Activated T-helper 1 cell treated with anti-CD3 and anti-CD28 coated beads, Interleukin-12 subunit alpha, Interleukin-12 subunit beta, Interleukin-2, Interleukin-4 antibody, amounts not matched to agents 30 ng/mL and 10 ng/mL and 1 ng/mL, durations not matched to agents 14 hours and 24 hours and 36 hours (primary cell): ENCODE measurements at regions of chr17 and their contacts with region 1.

Region 1: GRCh38 chr17:80761110-80761871 is 216.7 kb downstream of the RPTOR start:
- DNase-seq: peak; percentile 71
- H3K4me3 Mint-ChIP-seq: peak overlapping the region; percentile 77
- H3K27ac Mint-ChIP-seq: peak overlapping the region; percentile 99
- H3K4me1 Mint-ChIP-seq: peaks cover 81% of the 10 kb centered on the region
- H3K27me3 Mint-ChIP-seq: no peaks in the 10 kb centered on the region

Region 2: GRCh38 chr17:80575057-80575875 is 186.0 kb before region 1 on chr17:
- intact Hi-C with region 1: loop called (anchors 1 kb)
- DNase-seq: peak; percentile 84
- H3K4me3 Mint-ChIP-seq: no peak overlapping the region
- H3K27ac Mint-ChIP-seq: peak overlapping the region; percentile 2
- H3K4me1 Mint-ChIP-seq: peaks cover 31% of the 10 kb centered on the region
- H3K27me3 Mint-ChIP-seq: no peaks in the 10 kb centered on the region

Region 3: GRCh38 chr17:80720610-80721577 is 40.4 kb before region 1 on chr17:
- intact Hi-C with region 1: loop called (anchors 2 kb)
- DNase-seq: peak; percentile 67
- H3K4me3 Mint-ChIP-seq: peak overlapping the region; percentile 54
- H3K27ac Mint-ChIP-seq: peak overlapping the region; percentile 89
- H3K4me1 Mint-ChIP-seq: peaks cover 62% of the 10 kb centered on the region
- H3K27me3 Mint-ChIP-seq: no peaks in the 10 kb centered on the region

Region 4: GRCh38 chr17:80774643-80775281 is 13.5 kb after region 1 on chr17:
- intact Hi-C with region 1: loop called (anchors 1 kb)
- DNase-seq: no peak
- H3K4me3 Mint-ChIP-seq: peak overlapping the region; percentile 64
- H3K27ac Mint-ChIP-seq: peak overlapping the region; percentile 97
- H3K4me1 Mint-ChIP-seq: peaks cover 84% of the 10 kb centered on the region
- H3K27me3 Mint-ChIP-seq: no peaks in the 10 kb centered on the region

Region 5: DNA sequence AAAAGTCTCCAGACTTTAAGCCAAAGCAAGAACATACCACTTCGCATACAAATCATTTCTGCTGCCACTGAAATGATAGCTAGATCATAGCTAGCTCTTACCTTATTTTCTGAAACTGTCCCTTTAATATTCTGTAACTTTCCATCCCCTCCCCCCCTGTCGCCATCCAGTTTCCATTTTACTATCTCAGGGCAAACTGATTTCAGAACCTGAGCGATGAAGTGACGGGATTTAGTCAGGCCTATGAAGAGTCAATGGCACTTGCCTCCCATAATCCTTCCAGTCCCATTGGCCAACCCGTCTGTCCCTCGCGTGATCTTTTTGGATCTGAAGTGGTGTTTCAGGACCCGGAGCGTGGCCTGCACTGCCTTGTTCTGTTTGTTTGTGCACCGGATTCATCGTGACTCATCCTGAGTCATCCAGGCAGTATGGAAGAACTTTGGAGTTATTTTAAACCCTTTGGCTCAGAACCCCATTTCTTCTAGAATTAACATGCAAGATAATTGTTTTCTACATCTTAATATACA is 30.5 kb after region 1 on chr17:
- intact Hi-C with region 1: loop called (anchors 1 kb)
- DNase-seq: peak; percentile 49
- H3K4me3 Mint-ChIP-seq: peak overlapping the region; percentile 79
- H3K27ac Mint-ChIP-seq: peak overlapping the region; percentile 99
- H3K4me1 Mint-ChIP-seq: peaks cover 91% of the 10 kb centered on the region
- H3K27me3 Mint-ChIP-seq: no peaks in the 10 kb centered on the region

Region 6: GRCh38 chr17:80855948-80856862 is 94.9 kb after region 1 on chr17:
- intact Hi-C with region 1: loop called (anchors 2 kb)
- DNase-seq: peak; percentile 85
- H3K4me3 Mint-ChIP-seq: peak overlapping the region; percentile 61
- H3K27ac Mint-ChIP-seq: peak overlapping the region; percentile 96
- H3K4me1 Mint-ChIP-seq: peaks cover 80% of the 10 kb centered on the region
- H3K27me3 Mint-ChIP-seq: no peaks in the 10 kb centered on the region

Region 7: DNA sequence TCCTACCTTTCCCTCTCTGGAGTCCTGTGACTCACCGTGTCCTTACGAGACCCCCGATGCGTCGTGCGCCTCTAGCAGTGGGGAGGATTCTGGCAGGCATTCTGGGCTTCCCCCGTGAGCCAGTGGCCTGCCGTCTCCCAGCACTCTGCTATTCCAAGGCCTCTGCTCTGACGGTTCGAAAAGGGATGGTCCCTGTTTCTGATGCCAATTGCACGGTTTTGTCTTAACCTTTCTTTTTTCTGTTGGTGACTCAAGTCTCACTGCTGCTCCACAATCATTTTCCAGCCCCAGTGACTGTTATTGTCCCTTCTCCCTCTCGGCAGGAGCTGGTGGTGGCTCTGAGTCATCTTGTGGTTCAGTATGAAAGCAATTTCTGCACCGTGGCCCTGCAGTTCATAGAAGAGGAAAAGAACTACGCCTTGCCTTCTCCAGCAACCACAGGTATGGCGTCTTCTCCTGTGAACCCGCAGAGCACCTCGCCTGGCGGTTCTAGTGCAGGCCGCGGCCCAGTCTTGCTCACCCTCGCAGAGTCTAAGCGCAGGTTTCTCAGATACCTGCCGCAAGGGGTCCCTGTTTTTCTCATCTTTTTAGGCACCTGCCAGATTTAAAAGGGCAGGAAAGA is 130.2 kb after region 1 on chr17:
- intact Hi-C with region 1: loop called (anchors 1 kb)
- DNase-seq: peak; percentile 79
- H3K4me3 Mint-ChIP-seq: peak overlapping the region; percentile 73
- H3K27ac Mint-ChIP-seq: peak overlapping the region; percentile 87
- H3K4me1 Mint-ChIP-seq: peaks cover 73% of the 10 kb centered on the region
- H3K27me3 Mint-ChIP-seq: no peaks in the 10 kb centered on the region